A549 (cell line): ENCODE measurements at regions of chr17 and their contacts with region 1.

Region 1: DNA sequence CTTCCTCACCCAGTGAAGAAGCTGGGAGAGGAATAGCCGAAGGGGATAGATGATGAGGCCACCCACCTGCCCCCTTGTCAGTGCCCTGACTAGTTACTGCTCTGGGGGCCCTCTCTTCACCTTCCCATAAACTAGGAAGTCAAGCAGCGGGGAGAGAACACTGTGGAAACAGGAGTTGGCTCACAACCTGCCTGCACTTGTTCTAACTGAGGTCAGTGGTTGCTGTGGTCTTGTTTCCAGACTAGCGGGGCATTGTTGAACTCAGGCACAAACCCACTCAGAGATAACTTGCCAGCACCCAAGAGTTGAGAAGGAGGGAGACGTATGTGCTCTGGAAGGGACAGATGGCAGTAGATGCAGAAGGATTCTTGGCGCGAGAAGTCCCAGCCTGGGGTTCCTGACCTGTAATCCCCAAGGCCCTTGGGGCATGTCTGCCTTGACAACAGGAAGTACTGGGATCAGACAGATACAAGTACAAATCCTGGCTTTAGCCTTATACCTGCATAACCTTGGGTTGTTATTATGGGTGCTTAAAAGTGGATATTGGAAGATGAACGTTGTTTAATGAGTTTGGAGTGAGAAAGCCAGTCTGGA is 48.7 kb upstream of the DDX52 start:
- DNase-seq: no peak
- ATAC-seq: no peak; a peak in 1 of 6 replicates
- H3K4me3 ChIP-seq: no peak overlapping the region
- H3K27ac ChIP-seq: no peak overlapping the region
- H3K4me1 ChIP-seq: no peaks in the 10 kb centered on the region
- CTCF ChIP-seq: no peak
- EP300 ChIP-seq: no peak
- POLR2A ChIP-seq: no peak
- RAD21 ChIP-seq: no peak

Region 2: DNA sequence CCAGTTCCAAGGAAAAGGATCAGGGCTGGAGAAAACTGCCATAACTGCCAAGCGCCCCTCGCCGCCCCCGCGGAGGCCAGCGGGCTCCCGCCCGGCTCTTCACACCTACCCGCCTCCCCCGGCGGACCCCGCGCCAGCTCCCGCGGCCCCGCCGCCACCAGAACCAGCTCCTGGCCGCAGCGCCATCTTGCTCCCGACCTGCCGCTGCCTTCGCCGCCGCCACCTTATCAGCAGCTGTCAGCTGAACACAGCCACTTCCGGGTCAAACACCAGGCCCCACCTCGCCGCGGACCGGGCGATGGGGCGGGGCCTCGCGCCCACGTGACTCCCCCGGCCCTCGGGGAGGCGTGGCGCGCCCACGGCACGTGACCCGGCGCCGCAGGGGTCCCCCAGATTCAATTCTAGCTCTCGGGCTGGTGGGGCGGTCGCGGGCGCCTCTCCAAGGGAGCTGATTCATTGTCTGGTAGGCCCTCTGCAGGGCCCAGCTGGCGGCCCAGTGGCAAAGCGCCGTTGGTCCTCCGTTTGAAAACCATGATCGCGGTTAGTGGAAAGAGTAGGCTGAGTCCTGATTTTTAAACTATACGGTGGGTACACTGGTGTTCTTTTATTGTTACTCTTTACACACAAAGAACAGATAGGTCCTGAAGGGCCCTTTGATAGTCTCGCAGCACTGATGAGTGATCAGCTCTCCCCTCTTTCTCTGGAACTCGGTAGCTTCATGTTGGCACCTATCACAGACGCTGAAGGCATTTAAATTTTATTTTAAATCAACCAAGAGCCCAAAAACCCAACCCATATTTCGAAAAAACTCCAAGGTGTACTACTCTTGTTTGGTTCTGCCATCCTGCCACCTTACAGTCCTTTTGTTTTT is 82.5 kb before region 1 on chr17 and contains the start of gene SYNRG:
- CTCF ChIA-PET with region 1: no interaction called
- POLR2A ChIA-PET with region 1: no interaction called
- DNase-seq: peak; percentile 98 to 99
- ATAC-seq: peak; percentile 97
- H3K4me3 ChIP-seq: peak within 1 kb of the TSS; percentile 72
- H3K27ac ChIP-seq: peak within 1 kb of the TSS; percentile 86 to 93
- H3K4me1 ChIP-seq: peaks cover 20% of the 10 kb centered on the region; the same call in 1 of the 3 replicates
- CTCF ChIP-seq: peak; percentile 33; the same call in 1 of the 3 replicates
- EP300 ChIP-seq: peak in 1 of 2 experiments; percentile 20; a peak in 1 of 5 replicates
- POLR2A ChIP-seq: peak; percentile 90
- RAD21 ChIP-seq: peak; percentile 36 to 52
- polyA plus RNA-seq, gene SYNRG: 17.4 and 24.8 TPM in 2 replicates

Region 3: DNA sequence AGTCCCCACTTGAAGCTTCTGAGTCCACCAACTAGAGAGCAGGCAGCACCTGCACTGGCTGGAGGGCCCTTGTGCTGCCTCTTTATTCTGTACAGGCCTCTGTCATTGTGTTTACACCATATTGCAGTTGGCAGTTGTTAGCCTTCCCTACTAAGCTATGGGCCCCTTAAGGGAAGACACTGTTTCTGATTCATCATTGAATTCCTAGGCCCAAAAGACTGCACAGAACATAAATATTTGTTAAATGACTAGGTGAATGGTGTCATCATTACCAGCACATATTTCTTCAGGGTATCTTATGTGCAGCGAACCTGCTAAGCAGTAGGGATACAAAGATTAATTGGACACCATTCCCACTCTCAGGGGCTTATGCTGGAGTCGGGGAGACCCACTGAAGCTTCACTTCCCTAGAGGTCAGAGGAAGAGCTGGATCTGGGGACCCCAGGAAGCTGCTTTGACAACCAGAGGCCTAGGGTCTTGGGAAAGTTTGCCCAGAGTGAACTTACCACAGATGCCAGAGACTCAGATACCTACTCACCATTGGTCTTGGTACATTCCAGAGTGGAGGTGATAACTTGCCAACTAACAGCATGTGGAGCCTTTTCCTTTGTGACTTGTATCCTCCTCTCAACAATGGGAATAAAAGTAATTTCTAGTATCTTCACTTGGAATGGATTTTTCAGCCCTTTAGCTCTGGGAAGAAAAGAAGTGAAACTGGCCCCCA is 19.9 kb before region 1 on chr17:
- CTCF ChIA-PET with region 1: interaction called, 10 read pairs
- POLR2A ChIA-PET with region 1: no interaction called
- DNase-seq: peak; percentile 77 to 83
- ATAC-seq: peak; percentile 90 to 91
- H3K4me3 ChIP-seq: no peak overlapping the region
- H3K27ac ChIP-seq: peak overlapping the region; percentile 72 to 85
- H3K4me1 ChIP-seq: peaks cover 24% of the 10 kb centered on the region
- CTCF ChIP-seq: no peak
- EP300 ChIP-seq: 0 out of 5 replicates have a peak, but pooled peaks of 1 of the 2 experiments have one; percentile 40
- POLR2A ChIP-seq: no peak
- RAD21 ChIP-seq: no peak